ENCODE measurements at regions of chr7 and their contacts with region 1.

Region 1: DNA sequence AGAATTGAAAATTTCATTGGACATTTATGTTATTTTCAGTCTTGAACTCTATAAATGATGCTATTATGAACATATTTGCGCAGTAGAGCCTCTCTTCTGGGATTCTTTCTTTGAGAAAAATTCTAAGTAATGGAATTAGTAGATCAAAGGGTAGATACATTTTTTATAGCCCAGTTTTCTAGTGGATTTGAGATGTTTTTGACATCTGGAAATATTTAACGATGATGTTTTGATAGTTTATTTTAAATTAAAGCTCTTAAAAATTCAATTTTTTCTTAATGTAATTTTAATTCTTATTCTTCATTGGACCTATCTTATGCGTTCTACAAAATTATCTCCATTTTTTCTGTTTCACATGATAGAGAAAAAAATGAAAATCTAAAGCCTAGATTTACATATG is 103.0 kb downstream of the ADAM22 start:
- DNase-seq: no peak
- H3K4me3 ChIP-seq: no peak overlapping the region
- CTCF ChIP-seq: no peak
- POLR2A ChIP-seq: no peak

Region 2: GRCh38 chr7:87615197-87615596 is 421.9 kb before region 1 on chr7:
- intact Hi-C with region 1: no loop called
- DNase-seq: no peak
- H3K4me3 ChIP-seq: no peak overlapping the region
- CTCF ChIP-seq: no peak
- POLR2A ChIP-seq: no peak

Region 3: GRCh38 chr7:89593125-89593524 is 1556.1 kb after region 1 on chr7:
- intact Hi-C with region 1: loop called (anchors 5 kb)
- DNase-seq: no peak
- H3K4me3 ChIP-seq: no peak overlapping the region
- CTCF ChIP-seq: no peak
- POLR2A ChIP-seq: no peak